ENCODE measurements at regions of chr6 and their contacts with region 1.

Region 1: GRCh38 chr6:11595903-11596302 is 58.4 kb downstream of the TMEM170B start:
- DNase-seq: peak; percentile 29
- ATAC-seq: peak; percentile 93
- H3K4me3 Mint-ChIP-seq: no peak overlapping the region
- H3K27ac Mint-ChIP-seq: peak overlapping the region; percentile 61; the same call in 1 of the 2 replicates
- H3K4me1 Mint-ChIP-seq: peaks cover 18% of the 10 kb centered on the region
- H3K27me3 Mint-ChIP-seq: peaks cover 2% of the 10 kb centered on the region; the same call in 1 of the 2 replicates
- CTCF ChIP-seq: no peak

Region 2: GRCh38 chr6:11575408-11576033 is 20.4 kb before region 1 on chr6:
- CTCF ChIA-PET with region 1: interaction called, 15 read pairs
- POLR2A ChIA-PET with region 1: no interaction called
- DNase-seq: peak; percentile 63
- ATAC-seq: peak; percentile 100
- H3K4me3 Mint-ChIP-seq: no peak overlapping the region
- H3K27ac Mint-ChIP-seq: no peak overlapping the region
- H3K4me1 Mint-ChIP-seq: no peaks in the 10 kb centered on the region
- H3K27me3 Mint-ChIP-seq: no peaks in the 10 kb centered on the region
- CTCF ChIP-seq: peak; percentile 50

Region 3: GRCh38 chr6:11585426-11586016 is 10.4 kb before region 1 on chr6:
- CTCF ChIA-PET with region 1: interaction called, 14 read pairs
- POLR2A ChIA-PET with region 1: no interaction called
- DNase-seq: no peak
- ATAC-seq: no peak; the same call in 1 of the 2 replicates
- H3K4me3 Mint-ChIP-seq: no peak overlapping the region
- H3K27ac Mint-ChIP-seq: no peak overlapping the region
- H3K4me1 Mint-ChIP-seq: peaks cover 25% of the 10 kb centered on the region
- H3K27me3 Mint-ChIP-seq: no peaks in the 10 kb centered on the region
- CTCF ChIP-seq: no peak; the same call in 1 of the 2 replicates

Region 4: GRCh38 chr6:11609315-11610071 is 13.6 kb after region 1 on chr6:
- CTCF ChIA-PET with region 1: interaction called, 15 read pairs
- POLR2A ChIA-PET with region 1: no interaction called
- DNase-seq: no peak
- ATAC-seq: peak; percentile 69
- H3K4me3 Mint-ChIP-seq: no peak overlapping the region
- H3K27ac Mint-ChIP-seq: peak overlapping the region; percentile 97
- H3K4me1 Mint-ChIP-seq: peaks cover 29% of the 10 kb centered on the region
- H3K27me3 Mint-ChIP-seq: no peaks in the 10 kb centered on the region
- CTCF ChIP-seq: no peak

Region 5: DNA sequence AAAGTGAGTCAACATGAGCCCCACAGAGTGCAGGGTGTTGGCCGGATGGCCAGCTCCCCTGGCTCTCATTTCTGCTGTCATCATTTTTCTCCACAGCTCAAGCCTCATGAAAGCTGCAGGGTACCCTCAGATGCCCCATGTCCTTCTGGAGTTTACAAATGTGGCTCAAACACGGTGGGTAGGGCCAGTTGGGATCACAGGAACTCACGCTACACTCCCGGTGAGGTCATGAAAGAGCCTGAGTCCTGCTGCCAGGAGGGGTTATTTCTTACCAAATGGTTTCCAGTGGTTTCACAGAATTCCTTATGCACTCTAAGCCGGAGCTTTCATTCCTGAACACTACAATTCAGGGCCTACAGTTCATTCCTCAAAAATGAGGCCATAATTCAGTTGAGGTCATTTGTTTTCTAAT is 20.3 kb after region 1 on chr6:
- CTCF ChIA-PET with region 1: interaction called, 12 read pairs
- POLR2A ChIA-PET with region 1: no interaction called
- DNase-seq: no peak
- ATAC-seq: no peak; the same call in 1 of the 2 replicates
- H3K4me3 Mint-ChIP-seq: no peak overlapping the region
- H3K27ac Mint-ChIP-seq: no peak overlapping the region
- H3K4me1 Mint-ChIP-seq: 0 out of 2 replicates have a peak, but pooled peaks cover 2% of the 10 kb centered on the region
- H3K27me3 Mint-ChIP-seq: no peaks in the 10 kb centered on the region
- CTCF ChIP-seq: no peak

Region 6: DNA sequence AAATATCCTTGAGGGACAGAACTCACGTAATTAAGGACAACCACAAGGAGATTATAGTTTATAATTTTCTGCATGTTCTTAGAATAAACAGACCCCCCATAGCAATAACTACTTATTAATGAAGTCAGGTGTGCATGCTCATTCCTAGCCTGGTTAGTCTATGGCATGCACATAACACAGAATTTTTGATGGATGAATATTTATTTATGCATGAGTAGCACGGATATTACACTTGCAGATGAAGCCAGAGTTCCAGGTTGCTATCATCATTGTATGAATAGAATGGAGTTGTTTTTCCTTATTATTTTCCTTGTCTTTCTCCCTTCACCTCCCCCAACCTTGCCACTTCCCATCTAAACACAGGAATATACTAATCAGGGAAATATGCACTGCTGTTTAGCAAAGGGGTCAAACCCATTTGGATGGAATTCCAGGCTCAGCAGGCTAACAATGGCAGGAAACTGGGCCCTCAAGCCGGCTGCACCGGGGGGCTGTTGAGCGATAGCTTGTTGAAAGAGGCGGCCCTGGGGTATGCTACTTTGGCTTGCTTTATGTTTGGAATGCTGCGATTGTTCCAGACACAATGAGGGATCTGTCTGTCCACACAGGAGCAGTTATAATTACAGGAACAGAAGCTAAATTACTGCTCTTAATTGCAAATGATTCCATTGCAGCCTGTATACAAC is 54.3 kb after region 1 on chr6:
- CTCF ChIA-PET with region 1: interaction called, 11 read pairs
- POLR2A ChIA-PET with region 1: no interaction called
- DNase-seq: peak; percentile 71
- ATAC-seq: peak; percentile 91
- H3K4me3 Mint-ChIP-seq: peak overlapping the region; percentile 10; the same call in 1 of the 2 replicates
- H3K27ac Mint-ChIP-seq: peak overlapping the region; percentile 98
- H3K4me1 Mint-ChIP-seq: peaks cover 67% of the 10 kb centered on the region
- H3K27me3 Mint-ChIP-seq: no peaks in the 10 kb centered on the region
- CTCF ChIP-seq: no peak

Region 7: GRCh38 chr6:11675601-11676000 is 79.7 kb after region 1 on chr6:
- CTCF ChIA-PET with region 1: no interaction called
- POLR2A ChIA-PET with region 1: no interaction called
- DNase-seq: no peak
- ATAC-seq: no peak
- H3K4me3 Mint-ChIP-seq: no peak overlapping the region
- H3K27ac Mint-ChIP-seq: no peak overlapping the region
- H3K4me1 Mint-ChIP-seq: peaks cover 3% of the 10 kb centered on the region
- H3K27me3 Mint-ChIP-seq: no peaks in the 10 kb centered on the region
- CTCF ChIP-seq: no peak